Dendritic cell treated with granulocyte-macrophage colony-stimulating factor and Interleukin-4, amounts not matched to agents 40 ng/mL and 50 ng/mL, for 4 days (primary cell): ENCODE measurements at regions of chr2 and their contacts with region 1.

Region 1: DNA sequence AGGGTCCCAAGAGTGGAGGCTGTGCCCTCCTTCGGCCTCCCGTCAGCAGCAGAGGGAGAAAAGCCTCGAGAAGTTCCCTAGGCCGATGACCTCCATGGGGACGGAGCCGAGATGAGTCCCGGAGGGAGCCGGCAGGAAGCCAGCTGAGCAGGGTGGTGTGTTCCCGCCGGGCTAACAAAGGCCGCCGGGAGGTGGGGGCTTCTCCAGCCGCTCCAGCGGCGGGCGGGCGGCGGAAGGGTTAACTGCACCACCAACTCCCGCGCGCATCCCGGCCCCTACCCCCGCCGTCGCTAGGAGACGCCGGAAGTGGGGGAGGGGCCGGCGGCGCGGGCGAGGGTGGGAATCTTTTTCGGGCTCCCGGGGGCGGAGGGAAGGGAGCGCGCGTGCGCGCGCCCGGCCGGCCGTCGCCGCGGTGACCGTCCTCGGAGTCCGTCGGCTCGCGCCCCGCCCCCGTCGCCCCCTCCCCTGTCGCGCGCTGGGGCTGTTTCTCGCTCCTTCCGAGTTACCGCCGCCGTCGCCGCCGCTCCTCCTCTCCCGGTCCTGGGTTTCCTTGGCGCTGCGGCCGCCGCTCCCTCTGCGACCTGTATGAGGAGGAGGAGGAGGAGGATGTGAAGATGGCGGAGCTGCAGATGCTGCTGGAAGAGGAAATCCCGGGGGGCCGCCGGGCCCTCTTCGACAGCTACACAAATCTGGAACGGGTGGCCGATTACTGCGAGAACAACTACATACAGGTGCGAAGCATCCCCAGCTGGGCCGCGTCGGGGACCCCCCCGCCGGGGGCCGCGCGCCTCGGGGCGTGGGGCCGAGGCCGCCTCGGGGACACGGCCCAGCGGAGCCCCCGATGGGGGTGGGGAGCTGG is at the start of gene ABI2:
- H3K4me3 Mint-ChIP-seq: peak within 1 kb of the TSS; percentile 96
- H3K27ac Mint-ChIP-seq: peak within 1 kb of the TSS; percentile 50
- H3K4me1 Mint-ChIP-seq: peaks cover 24% of the 10 kb centered on the region
- H3K27me3 Mint-ChIP-seq: peaks cover 3% of the 10 kb centered on the region

Region 2: GRCh38 chr2:203238704-203239526 is 89.2 kb before region 1 on chr2 and contains the start of gene CYP20A1:
- intact Hi-C with region 1: loop called (anchors 1 kb)
- H3K4me3 Mint-ChIP-seq: peak within 1 kb of the TSS; percentile 85
- H3K27ac Mint-ChIP-seq: peak within 1 kb of the TSS; percentile 85
- H3K4me1 Mint-ChIP-seq: peaks cover 16% of the 10 kb centered on the region
- H3K27me3 Mint-ChIP-seq: no peaks in the 10 kb centered on the region

Region 3: DNA sequence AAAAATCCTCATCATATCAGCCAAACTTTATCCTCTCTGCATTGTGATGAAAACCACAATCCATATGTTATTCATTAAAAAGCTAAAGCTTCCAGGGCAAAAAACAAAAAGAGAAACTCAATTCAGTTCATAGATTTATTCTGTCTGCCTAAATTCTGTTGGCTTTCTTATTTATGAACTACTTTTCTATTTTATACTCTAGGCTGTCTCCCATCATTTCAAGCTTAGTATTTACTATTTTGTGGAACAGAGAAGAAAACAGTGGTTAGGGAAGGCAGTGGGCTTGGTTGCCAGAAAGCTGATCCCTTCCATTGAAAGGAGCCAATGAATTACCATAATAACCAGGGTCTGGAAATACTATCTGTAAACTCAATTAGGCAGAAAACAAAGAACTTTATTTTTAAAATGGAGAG is 135.1 kb after region 1 on chr2:
- intact Hi-C with region 1: no loop called
- H3K4me3 Mint-ChIP-seq: no peak overlapping the region
- H3K27ac Mint-ChIP-seq: no peak overlapping the region
- H3K4me1 Mint-ChIP-seq: peaks cover 7% of the 10 kb centered on the region
- H3K27me3 Mint-ChIP-seq: no peaks in the 10 kb centered on the region